Aorta (tissue), 5 donors: ENCODE measurements at regions of chr18 and their contacts with region 1.

Region 1: GRCh38 chr18:24271381-24272331 is 126.0 kb downstream of the OSBPL1A start:
- DNase-seq: peak; percentile 85 to 91
- ATAC-seq: peak; percentile 92
- H3K4me3 ChIP-seq: peak overlapping the region; percentile 51 to 72
- H3K27ac ChIP-seq: peak overlapping the region; percentile 62 to 73
- H3K4me1 ChIP-seq: no peaks in the 10 kb centered on the region
- H3K27me3 ChIP-seq: no peaks in the 10 kb centered on the region

Region 2: DNA sequence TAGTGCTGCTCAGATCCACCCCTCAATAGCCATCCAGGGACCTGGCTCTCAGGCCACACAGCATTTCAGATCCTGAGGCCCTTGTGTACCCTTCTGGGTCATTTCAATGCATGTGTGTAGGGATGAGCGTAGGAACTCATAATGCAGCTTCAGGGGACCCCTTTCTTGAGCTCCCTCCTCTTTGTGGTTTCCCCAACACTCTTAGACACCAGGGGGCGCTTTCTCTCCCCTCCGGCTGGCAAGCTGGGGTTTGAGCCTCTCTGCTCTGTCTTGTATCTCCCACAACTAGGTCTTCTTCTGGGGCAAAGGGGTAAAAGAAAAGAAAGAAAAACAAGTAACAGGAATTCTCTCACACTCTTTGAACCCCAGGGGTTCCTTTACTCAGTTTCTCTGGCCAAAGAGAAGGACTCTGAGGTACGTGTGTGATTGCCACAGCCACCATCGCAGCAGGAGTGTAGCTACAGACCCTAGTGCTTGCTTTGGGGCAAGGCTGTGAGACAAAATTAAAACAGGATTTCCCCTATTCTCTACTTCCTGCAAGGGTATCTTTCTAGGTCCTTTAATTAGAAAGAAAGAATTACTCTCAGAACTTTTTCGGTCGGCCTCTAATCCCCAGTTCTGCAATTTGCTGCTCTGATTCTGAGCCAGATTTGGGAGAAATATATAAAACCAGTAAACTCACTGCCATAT is 94.8 kb before region 1 on chr18:
- intact Hi-C with region 1: loop called (anchors 2 to 10 kb)
- DNase-seq: peak; percentile 66 to 81
- ATAC-seq: peak; percentile 56
- H3K4me3 ChIP-seq: no peak overlapping the region
- H3K27ac ChIP-seq: no peak overlapping the region
- H3K4me1 ChIP-seq: peaks cover 0 to 1% of the 10 kb centered on the region in 2 donors
- H3K27me3 ChIP-seq: no peaks in the 10 kb centered on the region

Region 3: GRCh38 chr18:24198461-24198860 is 73.2 kb before region 1 on chr18:
- intact Hi-C with region 1: loop called in 1 of 2 experiments (anchors 5 kb)
- DNase-seq: no peak
- ATAC-seq: no peak
- H3K4me3 ChIP-seq: no peak overlapping the region
- H3K27ac ChIP-seq: no peak overlapping the region
- H3K4me1 ChIP-seq: peaks cover 0 to 1% of the 10 kb centered on the region in 2 donors
- H3K27me3 ChIP-seq: no peaks in the 10 kb centered on the region

Region 4: GRCh38 chr18:24212939-24213338 is 58.7 kb before region 1 on chr18:
- intact Hi-C with region 1: loop called in 1 of 2 experiments (anchors 5 kb)
- DNase-seq: no peak
- ATAC-seq: peak; percentile 52
- H3K4me3 ChIP-seq: no peak overlapping the region
- H3K27ac ChIP-seq: peak overlapping the region in 1 of 2 donors; percentile 44
- H3K4me1 ChIP-seq: peaks cover 0 to 4% of the 10 kb centered on the region in 2 donors
- H3K27me3 ChIP-seq: no peaks in the 10 kb centered on the region

Region 5: DNA sequence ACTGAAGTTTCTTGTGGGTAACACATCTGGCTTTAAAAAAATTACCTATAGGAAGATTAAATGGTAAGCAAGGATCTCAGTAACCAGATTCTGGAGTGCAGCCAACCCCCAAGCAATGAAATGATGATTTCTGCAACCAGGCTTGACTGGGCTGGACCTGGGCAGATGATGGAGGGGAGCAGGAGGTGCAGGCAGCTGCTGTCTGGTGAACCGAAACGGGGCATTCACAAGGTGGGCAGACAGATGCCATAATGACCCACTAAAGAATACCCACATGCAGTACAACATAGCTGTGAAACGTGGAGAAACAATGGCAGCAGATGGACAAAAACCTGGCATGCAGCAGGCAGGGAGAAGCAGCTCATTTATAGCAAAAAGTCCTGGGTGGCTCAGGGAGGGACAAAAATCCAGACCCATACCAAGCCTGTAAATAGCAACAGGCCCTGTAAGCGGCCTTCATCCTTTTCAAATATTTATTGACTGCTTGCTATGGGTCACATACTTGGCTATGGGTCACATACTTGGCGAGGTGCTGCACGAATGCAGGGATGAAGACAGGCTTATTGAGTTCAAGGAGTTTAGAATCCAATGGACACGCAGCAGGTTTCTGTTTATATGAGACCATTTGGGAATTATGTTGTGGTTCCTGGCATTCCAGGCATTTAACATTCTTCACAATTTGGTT is 433.4 kb after region 1 on chr18:
- intact Hi-C with region 1: no loop called
- DNase-seq: no peak
- ATAC-seq: no peak
- H3K4me3 ChIP-seq: no peak overlapping the region
- H3K27ac ChIP-seq: no peak overlapping the region
- H3K4me1 ChIP-seq: no peaks in the 10 kb centered on the region
- H3K27me3 ChIP-seq: no peaks in the 10 kb centered on the region